Activated T-helper 1 cell treated with anti-CD3 and anti-CD28 coated beads, Interleukin-12 subunit alpha, Interleukin-12 subunit beta, Interleukin-2, Interleukin-4 antibody, amounts not matched to agents 30 ng/mL and 10 ng/mL and 1 ng/mL, durations not matched to agents 14 hours and 24 hours and 36 hours (primary cell): ENCODE measurements at regions of chr9 and their contacts with region 1.

Region 1: DNA sequence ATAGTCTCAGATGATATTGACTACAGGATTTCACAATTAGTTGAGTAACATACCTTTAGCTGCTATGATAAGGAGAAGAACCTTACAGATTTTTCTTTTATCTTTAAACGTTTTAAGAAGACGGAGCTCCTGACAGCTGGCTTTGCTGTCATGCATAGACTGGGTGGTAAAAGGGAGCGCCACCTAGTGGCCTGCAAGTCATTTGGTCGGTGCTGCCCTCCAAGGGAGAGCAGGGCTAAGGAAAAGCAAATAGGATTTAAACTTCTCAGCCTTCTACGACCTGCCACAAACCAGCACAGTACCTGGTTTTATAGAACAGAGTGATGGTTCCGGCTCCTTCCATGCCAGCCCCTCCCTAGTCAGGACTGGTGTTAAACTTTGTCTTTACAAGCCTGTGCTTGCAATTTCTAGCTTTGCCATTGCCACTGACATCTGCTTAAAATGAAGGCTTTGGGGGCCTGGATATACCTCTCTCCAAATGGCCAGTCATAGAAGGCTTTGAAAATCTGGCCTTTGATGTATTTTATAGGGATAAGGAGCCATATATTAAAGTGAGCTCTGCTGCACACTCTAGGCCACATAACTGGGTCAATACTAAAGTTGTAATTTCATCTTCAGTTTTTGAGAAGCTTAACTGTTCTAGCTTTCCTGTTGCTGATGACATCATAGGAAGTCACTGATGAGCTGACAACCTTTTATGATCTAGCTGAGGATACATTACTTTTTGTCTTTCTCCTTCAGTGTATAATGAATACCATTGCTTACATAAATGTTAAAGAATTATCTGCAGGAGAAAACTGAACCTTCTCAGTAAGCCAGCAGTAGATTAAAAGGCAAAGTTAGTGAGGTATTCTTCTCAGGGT is 31.1 kb upstream of the ADAMTSL1 start:
- DNase-seq: peak; percentile 24
- H3K4me3 Mint-ChIP-seq: no peak overlapping the region
- H3K27ac Mint-ChIP-seq: no peak overlapping the region
- H3K4me1 Mint-ChIP-seq: no peaks in the 10 kb centered on the region
- H3K27me3 Mint-ChIP-seq: peaks cover 10% of the 10 kb centered on the region

Region 2: GRCh38 chr9:17810728-17811571 is 631.9 kb before region 1 on chr9:
- intact Hi-C with region 1: loop called (anchors 1 kb)
- DNase-seq: peak; percentile 9
- H3K4me3 Mint-ChIP-seq: no peak overlapping the region
- H3K27ac Mint-ChIP-seq: no peak overlapping the region
- H3K4me1 Mint-ChIP-seq: no peaks in the 10 kb centered on the region
- H3K27me3 Mint-ChIP-seq: no peaks in the 10 kb centered on the region

Region 3: DNA sequence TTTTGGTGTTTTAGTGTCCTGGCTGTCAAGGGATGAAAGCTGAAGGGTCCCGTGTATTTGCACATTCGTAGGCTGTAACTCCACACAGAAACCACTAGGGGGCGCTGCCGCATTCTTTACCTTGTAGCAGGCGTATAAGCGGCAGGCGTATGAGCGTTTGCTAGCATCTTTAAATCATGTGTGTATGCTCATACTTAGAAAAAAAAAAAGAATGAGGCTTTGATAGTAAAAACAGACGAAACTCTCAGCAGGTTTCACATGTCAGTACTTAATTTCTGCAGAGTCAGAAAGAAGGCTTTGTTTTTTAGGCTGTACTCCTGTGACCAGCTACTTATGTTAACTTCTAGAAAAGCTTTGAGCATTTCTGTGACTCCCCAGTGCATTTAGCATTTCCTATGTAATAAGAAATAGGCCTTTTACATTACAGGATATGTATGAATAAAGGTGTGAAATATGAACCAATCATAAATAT is 187.7 kb before region 1 on chr9:
- intact Hi-C with region 1: loop called (anchors 1 kb)
- DNase-seq: peak; percentile 48
- H3K4me3 Mint-ChIP-seq: no peak overlapping the region
- H3K27ac Mint-ChIP-seq: no peak overlapping the region
- H3K4me1 Mint-ChIP-seq: no peaks in the 10 kb centered on the region
- H3K27me3 Mint-ChIP-seq: peaks cover 9% of the 10 kb centered on the region

Region 4: GRCh38 chr9:18463991-18464390 is 21.1 kb after region 1 on chr9:
- intact Hi-C with region 1: no loop called
- DNase-seq: no peak
- H3K4me3 Mint-ChIP-seq: no peak overlapping the region
- H3K27ac Mint-ChIP-seq: no peak overlapping the region
- H3K4me1 Mint-ChIP-seq: no peaks in the 10 kb centered on the region
- H3K27me3 Mint-ChIP-seq: no peaks in the 10 kb centered on the region